Vagina (tissue), 2 donors: ENCODE measurements at regions of chr1 and their contacts with region 1.

Region 1: DNA sequence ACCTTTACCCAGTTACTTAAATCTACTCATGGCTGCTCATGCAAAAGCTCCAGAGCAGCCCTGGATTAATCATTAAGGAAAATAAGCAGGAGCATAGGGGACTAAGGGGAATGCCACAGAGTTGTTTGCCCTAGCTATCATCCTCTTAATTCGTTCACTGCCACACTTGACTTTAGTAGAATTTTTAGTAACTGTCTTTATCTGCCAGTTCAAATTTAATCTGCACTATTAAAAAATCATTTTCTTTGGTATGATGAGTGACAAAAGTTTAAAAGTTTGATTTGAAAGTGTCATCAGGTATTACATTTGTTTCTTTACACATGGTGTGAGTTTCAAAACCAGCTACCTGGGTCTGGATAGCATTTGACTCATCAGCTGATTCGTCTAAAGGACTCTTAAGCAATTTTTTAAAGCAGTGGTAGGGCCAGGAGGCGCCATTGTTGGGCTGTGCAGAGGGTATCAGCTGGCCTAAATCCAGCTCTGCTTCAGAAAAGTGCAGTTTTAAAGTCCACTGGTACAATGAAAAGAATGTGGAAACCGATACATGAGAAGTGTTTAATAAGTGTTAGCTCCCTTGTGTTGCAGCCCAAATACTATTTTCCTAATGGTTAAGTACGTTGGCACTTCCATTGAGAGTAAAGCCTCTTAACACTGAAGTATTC is 69.9 kb upstream of the DR1 start:
- DNase-seq: no peak
- H3K4me3 ChIP-seq: no peak overlapping the region
- H3K27ac ChIP-seq: no peak overlapping the region
- H3K4me1 ChIP-seq: no peaks in the 10 kb centered on the region
- H3K27me3 ChIP-seq: no peaks in the 10 kb centered on the region
- CTCF ChIP-seq: no peak
- POLR2A ChIP-seq: no peak

Region 2: GRCh38 chr1:93033785-93034184 is 242.0 kb before region 1 on chr1:
- intact Hi-C with region 1: loop called (anchors 10 kb)
- DNase-seq: no peak
- H3K4me3 ChIP-seq: no peak overlapping the region
- H3K27ac ChIP-seq: no peak overlapping the region
- H3K4me1 ChIP-seq: no peaks in the 10 kb centered on the region
- H3K27me3 ChIP-seq: no peaks in the 10 kb centered on the region
- CTCF ChIP-seq: no peak
- POLR2A ChIP-seq: no peak

Region 3: GRCh38 chr1:93179886-93180722 is 95.7 kb before region 1 on chr1 and contains the start of gene TMED5:
- intact Hi-C with region 1: no loop called
- DNase-seq: peak in 1 of 2 donors; percentile 99
- H3K4me3 ChIP-seq: peak within 1 kb of the TSS; percentile 97 to 99
- H3K27ac ChIP-seq: peak within 1 kb of the TSS; percentile 99
- H3K4me1 ChIP-seq: peaks cover 36% of the 10 kb centered on the region
- H3K27me3 ChIP-seq: no peaks in the 10 kb centered on the region
- CTCF ChIP-seq: peak in 1 of 3 experiments; percentile 16
- POLR2A ChIP-seq: peak in 1 of 2 donors; percentile 98
- total RNA-seq, gene TMED5: 40.8 TPM

Region 4: DNA sequence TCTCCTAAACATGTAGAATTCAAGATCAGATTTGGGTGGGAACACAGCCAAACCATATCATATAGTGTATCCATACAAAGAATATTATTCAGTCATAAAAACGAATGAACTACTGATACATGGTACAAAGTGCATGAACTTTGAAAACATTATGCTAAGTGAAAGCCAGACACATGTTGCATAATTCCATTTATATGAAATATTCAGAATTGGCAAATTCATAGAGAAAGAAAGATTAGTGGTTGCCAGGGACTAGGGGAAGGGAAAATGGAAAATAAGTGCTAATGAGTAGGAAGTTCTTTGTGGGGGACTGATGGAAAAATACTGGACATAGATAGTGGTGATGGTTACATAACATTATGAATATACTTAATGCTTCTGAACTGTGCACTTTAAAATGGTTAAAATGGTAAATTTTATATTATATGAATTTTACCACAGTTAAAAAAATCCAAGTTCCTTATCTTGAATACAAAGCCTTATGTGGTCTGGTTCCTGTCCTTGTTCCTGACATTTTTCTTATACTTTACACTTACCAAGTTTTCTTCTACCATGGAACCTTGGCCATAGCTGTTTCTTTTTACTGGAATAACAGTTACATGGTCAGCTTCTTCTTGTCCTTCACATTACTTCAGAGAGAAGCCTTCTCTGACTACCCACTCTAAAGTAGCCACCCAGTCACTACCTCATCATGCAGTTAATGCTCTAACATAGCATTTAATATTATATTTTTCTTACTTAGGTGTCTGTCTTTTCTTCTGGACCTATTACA is 31.3 kb before region 1 on chr1:
- intact Hi-C with region 1: loop called (anchors 2 kb)
- DNase-seq: no peak
- H3K4me3 ChIP-seq: no peak overlapping the region
- H3K27ac ChIP-seq: no peak overlapping the region
- H3K4me1 ChIP-seq: no peaks in the 10 kb centered on the region
- H3K27me3 ChIP-seq: no peaks in the 10 kb centered on the region
- CTCF ChIP-seq: no peak
- POLR2A ChIP-seq: no peak